CD8-positive, alpha-beta T cell (primary cell): ENCODE measurements at regions of chr7 and their contacts with region 1.

Region 1: DNA sequence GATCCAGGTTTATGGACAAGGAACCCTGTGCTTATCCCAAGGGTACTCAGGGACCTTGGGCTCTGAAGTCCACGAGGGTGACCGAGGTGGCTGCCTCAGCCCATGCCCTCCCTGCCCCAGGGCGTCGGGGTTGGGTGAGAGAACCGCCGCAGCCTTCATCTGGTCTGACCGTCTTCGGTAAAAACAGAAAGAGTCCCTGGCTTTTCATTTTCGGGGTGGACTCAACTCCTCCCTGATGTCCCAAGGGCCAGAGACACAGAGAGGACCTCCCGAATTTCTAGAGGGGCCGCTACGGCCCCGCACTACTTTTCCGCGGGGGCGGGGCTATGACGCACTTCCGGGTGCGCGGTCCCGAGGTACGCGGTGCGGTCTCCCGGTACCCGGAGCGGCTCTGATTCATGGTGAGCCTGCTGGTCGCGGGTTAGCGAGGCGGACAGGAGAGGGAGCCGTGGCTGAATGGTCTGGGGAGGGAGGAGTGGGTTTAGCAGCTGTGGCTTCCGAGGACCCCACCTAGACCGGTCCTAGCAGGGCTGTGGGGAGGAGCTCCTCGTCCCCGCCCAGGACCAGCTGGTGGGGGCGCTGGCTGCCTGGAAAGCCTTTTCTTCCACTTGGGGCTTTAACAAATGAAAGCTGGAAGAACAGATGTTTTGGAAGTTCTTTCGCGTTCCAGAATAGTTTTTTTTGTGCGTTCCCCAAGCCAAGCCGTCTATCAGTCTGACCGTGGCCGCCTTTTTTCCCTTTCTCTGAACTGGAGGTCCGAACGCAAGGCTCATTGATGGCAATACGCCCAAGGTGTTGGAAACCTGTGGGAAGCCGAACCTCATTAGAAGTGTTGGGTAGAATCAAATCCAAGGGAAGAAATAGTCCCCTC is at the start of gene ZSCAN21:
- DNase-seq: peak; percentile 51 to 91 (median 84)
- ATAC-seq: peak; percentile 89
- H3K4me3 ChIP-seq: peak within 1 kb of the TSS; percentile 69 to 99
- H3K4me3 Mint-ChIP-seq: peak within 1 kb of the TSS; percentile 93
- H3K27ac ChIP-seq: peak within 1 kb of the TSS; percentile 87 to 96
- H3K27ac Mint-ChIP-seq: peak within 1 kb of the TSS; percentile 98
- H3K4me1 ChIP-seq: peaks cover 12% of the 10 kb centered on the region
- H3K4me1 Mint-ChIP-seq: peaks cover 25% of the 10 kb centered on the region
- H3K27me3 ChIP-seq: no peaks in the 10 kb centered on the region
- H3K27me3 Mint-ChIP-seq: no peaks in the 10 kb centered on the region
- CTCF ChIP-seq: no peak
- total RNA-seq, gene ZSCAN21: 4.8 to 5.7 TPM

Region 2: GRCh38 chr7:99465421-99465768 is 584.3 kb before region 1 on chr7:
- CTCF ChIA-PET with region 1: no interaction called
- POLR2A ChIA-PET with region 1: no interaction called
- intact Hi-C with region 1: no loop called
- DNase-seq: no peak
- ATAC-seq: no peak
- H3K4me3 ChIP-seq: peak overlapping the region; percentile 77 to 92
- H3K4me3 Mint-ChIP-seq: peak overlapping the region; percentile 96
- H3K27ac ChIP-seq: peak overlapping the region; percentile 61 to 82
- H3K27ac Mint-ChIP-seq: peak overlapping the region; percentile 96
- H3K4me1 ChIP-seq: peaks cover 13% of the 10 kb centered on the region
- H3K4me1 Mint-ChIP-seq: peaks cover 39% of the 10 kb centered on the region
- H3K27me3 ChIP-seq: no peaks in the 10 kb centered on the region
- H3K27me3 Mint-ChIP-seq: no peaks in the 10 kb centered on the region
- CTCF ChIP-seq: no peak

Region 3: GRCh38 chr7:99910976-99911375 is 138.7 kb before region 1 on chr7:
- CTCF ChIA-PET with region 1: interaction called, 5 read pairs
- POLR2A ChIA-PET with region 1: interaction called, 3 read pairs
- intact Hi-C with region 1: loop called in 1 of 2 experiments (anchors 1 kb)
- DNase-seq: no peak
- ATAC-seq: no peak
- H3K4me3 ChIP-seq: no peak overlapping the region
- H3K4me3 Mint-ChIP-seq: no peak overlapping the region
- H3K27ac ChIP-seq: no peak overlapping the region
- H3K27ac Mint-ChIP-seq: no peak overlapping the region
- H3K4me1 ChIP-seq: peaks cover 19% of the 10 kb centered on the region
- H3K4me1 Mint-ChIP-seq: peaks cover 63% of the 10 kb centered on the region
- H3K27me3 ChIP-seq: no peaks in the 10 kb centered on the region
- H3K27me3 Mint-ChIP-seq: no peaks in the 10 kb centered on the region
- CTCF ChIP-seq: no peak

Region 4: GRCh38 chr7:99997545-99998137 is 52.0 kb before region 1 on chr7:
- CTCF ChIA-PET with region 1: interaction called, 6 read pairs
- POLR2A ChIA-PET with region 1: interaction called, 4 read pairs
- intact Hi-C with region 1: loop called (anchors 1 kb)
- DNase-seq: peak; percentile 51 to 91 (median 74)
- ATAC-seq: peak; percentile 88
- H3K4me3 ChIP-seq: peak overlapping the region; percentile 48 to 54
- H3K4me3 Mint-ChIP-seq: peak overlapping the region; percentile 73
- H3K27ac ChIP-seq: peak overlapping the region; percentile 64 to 82
- H3K27ac Mint-ChIP-seq: peak overlapping the region; percentile 92
- H3K4me1 ChIP-seq: peaks cover 12% of the 10 kb centered on the region
- H3K4me1 Mint-ChIP-seq: peaks cover 11% of the 10 kb centered on the region
- H3K27me3 ChIP-seq: no peaks in the 10 kb centered on the region
- H3K27me3 Mint-ChIP-seq: no peaks in the 10 kb centered on the region
- CTCF ChIP-seq: no peak

Region 5: GRCh38 chr7:100101016-100101862 is 51.6 kb after region 1 on chr7 and contains the starts of genes AP4M1 and MCM7:
- CTCF ChIA-PET with region 1: interaction called, 4 read pairs
- POLR2A ChIA-PET with region 1: interaction called, 6 read pairs
- intact Hi-C with region 1: loop called (anchors 1 kb)
- DNase-seq: peak; percentile 88 to 98 (median 96)
- ATAC-seq: peak; percentile 83
- H3K4me3 ChIP-seq: peak within 1 kb of the TSS; percentile 91 to 98
- H3K4me3 Mint-ChIP-seq: peak within 1 kb of the TSS; percentile 95
- H3K27ac ChIP-seq: peak within 1 kb of the TSS; percentile 80 to 89
- H3K27ac Mint-ChIP-seq: peak within 1 kb of the TSS; percentile 97
- H3K4me1 ChIP-seq: peaks cover 27% of the 10 kb centered on the region
- H3K4me1 Mint-ChIP-seq: peaks cover 41% of the 10 kb centered on the region
- H3K27me3 ChIP-seq: no peaks in the 10 kb centered on the region
- H3K27me3 Mint-ChIP-seq: no peaks in the 10 kb centered on the region
- CTCF ChIP-seq: no peak
- total RNA-seq, gene AP4M1: 2.8 to 3.9 TPM
- total RNA-seq, gene MCM7: 63.7 to 64.6 TPM

Region 6: GRCh38 chr7:100137851-100138760 is 88.4 kb after region 1 on chr7:
- CTCF ChIA-PET with region 1: no interaction called
- POLR2A ChIA-PET with region 1: no interaction called
- intact Hi-C with region 1: no loop called
- DNase-seq: no peak
- ATAC-seq: peak; percentile 51
- H3K4me3 ChIP-seq: no peak overlapping the region
- H3K4me3 Mint-ChIP-seq: peak overlapping the region; percentile 3
- H3K27ac ChIP-seq: no peak overlapping the region
- H3K27ac Mint-ChIP-seq: peak overlapping the region; percentile 32
- H3K4me1 ChIP-seq: peaks cover 9% of the 10 kb centered on the region
- H3K4me1 Mint-ChIP-seq: peaks cover 11% of the 10 kb centered on the region
- H3K27me3 ChIP-seq: no peaks in the 10 kb centered on the region
- H3K27me3 Mint-ChIP-seq: no peaks in the 10 kb centered on the region
- CTCF ChIP-seq: no peak